Activated naive CD4-positive, alpha-beta T cell treated with anti-CD3 and anti-CD28 coated beads for 36 hours (primary cell): ENCODE measurements at regions of chr10 and their contacts with region 1.

Region 1: DNA sequence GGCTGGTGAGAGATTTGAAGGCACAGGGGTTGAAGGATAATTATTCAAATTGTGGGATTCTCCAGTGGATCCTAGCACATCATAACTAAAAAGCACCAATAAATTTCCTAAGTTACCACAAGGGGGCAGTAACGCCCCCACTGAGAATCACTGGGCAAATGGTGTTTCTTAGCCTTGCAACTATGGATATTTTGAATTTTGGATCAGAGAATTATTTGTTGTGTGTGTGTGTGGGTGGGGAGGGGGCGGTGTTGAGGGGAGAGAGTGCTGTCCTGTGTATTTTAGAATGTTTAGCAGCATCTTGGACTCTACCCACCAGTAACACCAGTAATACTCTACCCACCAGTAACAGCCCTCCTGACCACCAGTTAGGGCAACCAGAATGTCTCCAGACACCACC is 63.3 kb upstream of the PRKG1 start:
- DNase-seq: peak; percentile 8
- H3K4me3 Mint-ChIP-seq: no peak overlapping the region
- H3K27ac Mint-ChIP-seq: no peak overlapping the region
- H3K4me1 Mint-ChIP-seq: no peaks in the 10 kb centered on the region
- H3K27me3 Mint-ChIP-seq: peaks cover 9% of the 10 kb centered on the region

Region 2: DNA sequence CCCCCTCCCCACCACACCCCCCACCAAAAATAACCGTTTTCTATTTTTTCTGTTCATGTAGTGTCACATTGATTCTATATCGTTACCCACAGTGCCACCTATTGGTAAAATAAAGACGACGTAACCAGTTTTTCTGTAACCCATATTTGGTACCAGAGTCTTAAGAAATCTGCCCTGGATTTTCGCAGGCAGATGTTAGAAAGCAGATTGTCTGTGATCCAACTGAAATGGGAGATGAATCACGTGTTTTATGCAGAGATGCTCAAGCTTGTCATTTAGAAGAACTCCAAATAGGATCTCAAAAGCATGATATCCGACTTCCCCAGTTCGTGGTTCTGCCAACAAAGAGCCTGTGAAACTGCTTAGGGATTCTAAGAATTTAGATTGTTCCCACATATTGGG is 949.5 kb after region 1 on chr10:
- CTCF ChIA-PET with region 1: interaction called, 3 read pairs
- intact Hi-C with region 1: loop called (anchors 2 kb)
- DNase-seq: no peak
- H3K4me3 Mint-ChIP-seq: no peak overlapping the region
- H3K27ac Mint-ChIP-seq: no peak overlapping the region
- H3K4me1 Mint-ChIP-seq: no peaks in the 10 kb centered on the region
- H3K27me3 Mint-ChIP-seq: peaks cover 16% of the 10 kb centered on the region

Region 3: GRCh38 chr10:52004342-52004949 is 993.5 kb after region 1 on chr10:
- CTCF ChIA-PET with region 1: no interaction called
- intact Hi-C with region 1: loop called (anchors 1 kb)
- DNase-seq: no peak
- H3K4me3 Mint-ChIP-seq: no peak overlapping the region
- H3K27ac Mint-ChIP-seq: no peak overlapping the region
- H3K4me1 Mint-ChIP-seq: no peaks in the 10 kb centered on the region
- H3K27me3 Mint-ChIP-seq: peaks cover 3% of the 10 kb centered on the region